Heart left ventricle (tissue), 16 donors: ENCODE measurements at regions of chr19 and their contacts with region 1.

Region 1: DNA sequence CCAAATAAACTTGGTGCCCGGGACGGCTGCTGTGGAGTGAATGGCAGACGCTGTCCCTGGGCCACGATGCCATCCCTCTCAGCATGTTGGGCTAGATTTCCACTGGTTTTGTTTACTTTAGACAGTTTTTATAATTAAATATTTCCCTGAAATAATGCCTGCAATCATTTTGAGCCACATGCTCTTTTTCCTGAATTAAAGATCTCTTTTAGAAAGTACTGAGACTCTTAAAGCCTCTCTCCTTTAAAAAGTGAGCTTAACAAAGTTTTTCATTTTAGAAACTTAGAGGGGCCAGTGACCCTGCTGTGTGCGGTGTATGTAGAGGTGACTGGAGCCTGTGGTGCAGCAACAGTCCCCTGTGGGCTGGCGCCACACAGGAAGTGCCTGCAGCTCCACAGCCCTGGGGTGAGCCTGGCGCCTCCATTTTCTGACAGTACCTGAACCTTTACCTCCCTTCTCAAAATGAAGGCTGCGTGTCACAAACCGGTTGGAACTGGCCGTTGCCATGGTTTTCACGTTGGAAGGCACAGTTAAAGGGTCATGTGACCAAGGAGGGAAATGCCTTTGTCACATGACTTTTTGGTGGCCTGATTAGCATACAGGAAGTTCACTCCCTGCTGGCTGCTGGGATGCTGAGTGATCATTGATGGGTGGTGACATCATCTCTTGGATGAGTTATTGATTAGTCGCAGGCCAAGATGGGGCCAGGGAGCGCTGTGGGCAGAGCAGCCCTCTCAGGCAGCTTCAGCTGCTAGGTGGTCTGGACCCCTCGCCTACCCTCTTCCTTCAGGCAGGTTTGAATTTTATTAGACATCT is 26.3 kb downstream of the TSSK6 start:
- DNase-seq: peak; percentile 77 to 84 (median 79)
- ATAC-seq: peak; percentile 10 to 68 (median 56)
- H3K4me3 ChIP-seq: peak overlapping the region in 8 of 12 donors; percentile 1 to 40 (median 25)
- H3K27ac ChIP-seq: peak overlapping the region; percentile 38 to 94 (median 70)
- H3K4me1 ChIP-seq: peaks cover 10 to 60% (median 45%) of the 10 kb centered on the region in 12 donors
- H3K27me3 ChIP-seq: no peaks in the 10 kb centered on the region
- CTCF ChIP-seq: no peak
- POLR2A ChIP-seq: no peak

Region 2: GRCh38 chr19:19192078-19192882 is 296.8 kb before region 1 on chr19 and contains the starts of genes BORCS8 and RFXANK:
- intact Hi-C with region 1: loop called in 1 of 10 experiments (anchors 10 kb)
- DNase-seq: peak; percentile 98 to 100 (median 99)
- ATAC-seq: peak; percentile 96 to 98 (median 97)
- H3K4me3 ChIP-seq: peak within 1 kb of the TSS; percentile 63 to 100 (median 93)
- H3K27ac ChIP-seq: peak within 1 kb of the TSS; percentile 97 to 100 (median 100)
- H3K4me1 ChIP-seq: peaks cover 4 to 57% (median 36%) of the 10 kb centered on the region in 12 donors
- H3K27me3 ChIP-seq: no peaks in the 10 kb centered on the region
- CTCF ChIP-seq: no peak
- POLR2A ChIP-seq: peak in 1 of 2 donors; percentile 71
- total RNA-seq, gene BORCS8: 14.4 to 28.9 (median 22.7) TPM
- total RNA-seq, gene RFXANK: 26.5 to 45.7 (median 39.5) TPM

Region 3: GRCh38 chr19:19329126-19329525 is 160.0 kb before region 1 on chr19:
- intact Hi-C with region 1: no loop called
- DNase-seq: no peak
- ATAC-seq: peak in 1 of 4 donors; percentile 19
- H3K4me3 ChIP-seq: no peak overlapping the region
- H3K27ac ChIP-seq: peak overlapping the region in 1 of 12 donors; percentile 51
- H3K4me1 ChIP-seq: peaks cover 0 to 19% (median 8%) of the 10 kb centered on the region in 12 donors
- H3K27me3 ChIP-seq: no peaks in the 10 kb centered on the region
- CTCF ChIP-seq: no peak
- POLR2A ChIP-seq: no peak

Region 4: GRCh38 chr19:19366612-19367396 is 122.3 kb before region 1 on chr19:
- intact Hi-C with region 1: loop called (anchors 1 to 2 kb)
- DNase-seq: peak; percentile 58 to 86 (median 67)
- ATAC-seq: peak; percentile 75 to 90 (median 82)
- H3K4me3 ChIP-seq: no peak overlapping the region
- H3K27ac ChIP-seq: peak overlapping the region in 1 of 12 donors; percentile 27
- H3K4me1 ChIP-seq: peaks cover 0 to 21% (median 10%) of the 10 kb centered on the region in 12 donors
- H3K27me3 ChIP-seq: no peaks in the 10 kb centered on the region
- CTCF ChIP-seq: peak; percentile 90 to 97 (median 94)
- POLR2A ChIP-seq: no peak

Region 5: DNA sequence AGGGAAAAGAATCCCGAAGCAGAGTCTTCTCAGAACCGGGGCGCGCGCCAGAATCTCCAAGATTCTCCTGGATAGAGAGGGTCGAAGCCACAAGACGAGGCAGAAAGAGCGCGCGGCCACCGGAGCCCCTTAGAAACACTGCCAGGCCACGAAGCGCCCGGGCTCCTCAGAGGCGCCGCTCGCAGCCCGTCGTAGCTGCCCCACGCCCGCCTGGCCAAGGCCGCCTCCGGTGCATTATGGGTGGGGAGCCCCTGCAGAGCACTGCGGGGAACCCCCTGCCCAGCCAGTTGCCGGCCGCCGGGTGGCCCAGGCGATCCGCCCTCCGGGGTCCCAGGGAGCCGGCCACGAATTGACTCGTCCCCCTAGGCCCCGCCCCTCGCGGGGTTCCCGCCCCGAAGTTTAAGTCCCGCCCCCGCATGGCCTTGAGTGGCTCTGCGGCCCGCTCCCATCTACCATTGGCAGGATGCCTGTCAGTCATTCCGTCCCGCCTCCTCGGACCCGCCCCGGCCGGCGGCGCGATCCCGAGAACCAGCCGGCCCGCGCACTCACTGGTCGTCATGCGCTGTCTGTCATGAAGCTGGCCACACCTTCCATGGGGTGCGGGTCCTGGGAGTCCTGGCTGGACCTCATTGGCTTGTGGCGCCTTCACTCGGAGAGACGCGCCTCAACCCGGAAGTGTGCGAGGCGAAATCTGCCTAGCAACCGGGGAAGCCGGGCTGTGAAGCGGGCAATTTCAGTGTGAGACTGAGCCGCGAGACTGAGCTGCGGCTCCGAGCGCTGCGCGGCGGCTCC is 103.8 kb before region 1 on chr19:
- intact Hi-C with region 1: loop called in 2 of 10 experiments (anchors 5 kb)
- DNase-seq: peak; percentile 100
- ATAC-seq: peak; percentile 98 to 99 (median 99)
- H3K4me3 ChIP-seq: peak overlapping the region; percentile 36 to 97 (median 88)
- H3K27ac ChIP-seq: peak overlapping the region; percentile 14 to 90 (median 85)
- H3K4me1 ChIP-seq: peaks cover 7 to 66% (median 41%) of the 10 kb centered on the region in 12 donors
- H3K27me3 ChIP-seq: no peaks in the 10 kb centered on the region
- CTCF ChIP-seq: peak in 8 of 12 donors; percentile 6 to 49 (median 28)
- POLR2A ChIP-seq: peak in 1 of 2 donors; percentile 80